GM12878 (cell line): ENCODE measurements at regions of chr19 and their contacts with region 1.

Region 1: GRCh38 chr19:18521885-18522624 is at the start of gene ELL:
- DNase-seq: peak; percentile 99
- ATAC-seq: peak; percentile 94
- H3K4me3 ChIP-seq: peak within 1 kb of the TSS; percentile 98
- H3K27ac ChIP-seq: peak within 1 kb of the TSS; percentile 89
- H3K4me1 ChIP-seq: peaks cover 8% of the 10 kb centered on the region
- H3K27me3 ChIP-seq: no peaks in the 10 kb centered on the region
- CTCF ChIP-seq: 0 out of 6 replicates have a peak, but pooled peaks of 1 of the 3 experiments have one; percentile 2
- EP300 ChIP-seq: no peak; a peak in 1 of 4 replicates
- POLR2A ChIP-seq: peak; percentile 98
- RAD21 ChIP-seq: no peak
- polyA plus RNA-seq, gene ELL: 0.91 to 0.98 TPM

Region 2: GRCh38 chr19:18469069-18469846 is 52.8 kb before region 1 on chr19:
- CTCF ChIA-PET with region 1: interaction called, 10 read pairs
- POLR2A ChIA-PET with region 1: no interaction called
- RAD21 ChIA-PET with region 1: no interaction called
- SMC1A ChIA-PET with region 1: interaction called, 4 read pairs
- in situ Hi-C with region 1: no loop called
- intact Hi-C with region 1: no loop called
- DNase-seq: no peak
- ATAC-seq: peak; percentile 78
- H3K4me3 ChIP-seq: no peak overlapping the region
- H3K27ac ChIP-seq: no peak overlapping the region
- H3K4me1 ChIP-seq: no peaks in the 10 kb centered on the region
- H3K27me3 ChIP-seq: no peaks in the 10 kb centered on the region
- CTCF ChIP-seq: peak; percentile 45 to 69 (median 66)
- EP300 ChIP-seq: no peak
- POLR2A ChIP-seq: no peak
- RAD21 ChIP-seq: peak; percentile 46; the same call in 1 of the 2 replicates

Region 3: GRCh38 chr19:18542936-18543815 is 21.1 kb after region 1 on chr19 and contains the start of gene FKBP8:
- CTCF ChIA-PET with region 1: interaction called, 16 read pairs
- POLR2A ChIA-PET with region 1: interaction called, 6 read pairs
- RAD21 ChIA-PET with region 1: interaction called, 7 read pairs
- SMC1A ChIA-PET with region 1: interaction called, 5 read pairs
- in situ Hi-C with region 1: no loop called
- intact Hi-C with region 1: no loop called
- DNase-seq: no peak
- ATAC-seq: peak; percentile 99
- H3K4me3 ChIP-seq: peak within 1 kb of the TSS; percentile 82
- H3K27ac ChIP-seq: peak within 1 kb of the TSS; percentile 78
- H3K4me1 ChIP-seq: peaks cover 10% of the 10 kb centered on the region
- H3K27me3 ChIP-seq: no peaks in the 10 kb centered on the region
- CTCF ChIP-seq: no peak
- EP300 ChIP-seq: no peak
- POLR2A ChIP-seq: no peak
- RAD21 ChIP-seq: no peak
- polyA plus RNA-seq, gene FKBP8: 0.13 to 1.1 TPM

Region 4: GRCh38 chr19:18571564-18572300 is 49.7 kb after region 1 on chr19 and contains the start of gene UBA52:
- CTCF ChIA-PET with region 1: interaction called, 16 read pairs
- POLR2A ChIA-PET with region 1: interaction called, 36 read pairs
- RAD21 ChIA-PET with region 1: interaction called, 26 read pairs
- SMC1A ChIA-PET with region 1: interaction called, 16 read pairs
- in situ Hi-C with region 1: no loop called
- intact Hi-C with region 1: loop called (anchors 1 kb)
- DNase-seq: peak; percentile 92
- ATAC-seq: peak; percentile 98
- H3K4me3 ChIP-seq: peak within 1 kb of the TSS; percentile 95
- H3K27ac ChIP-seq: peak within 1 kb of the TSS; percentile 76
- H3K4me1 ChIP-seq: peaks cover 11% of the 10 kb centered on the region; the same call in 1 of the 2 replicates
- H3K27me3 ChIP-seq: no peaks in the 10 kb centered on the region
- CTCF ChIP-seq: no peak
- EP300 ChIP-seq: 0 out of 4 replicates have a peak, but pooled peaks of 1 of the 2 experiments have one; percentile 17
- POLR2A ChIP-seq: peak; percentile 99
- RAD21 ChIP-seq: no peak
- polyA plus RNA-seq, gene UBA52: 2,192 to 2,288 TPM

Region 5: GRCh38 chr19:18594096-18594823 is 72.2 kb after region 1 on chr19:
- CTCF ChIA-PET with region 1: interaction called, 64 read pairs
- POLR2A ChIA-PET with region 1: interaction called, 21 read pairs
- RAD21 ChIA-PET with region 1: interaction called, 35 read pairs
- SMC1A ChIA-PET with region 1: interaction called, 18 read pairs
- in situ Hi-C with region 1: no loop called
- intact Hi-C with region 1: loop called (anchors 2 kb)
- DNase-seq: no peak
- ATAC-seq: peak; percentile 81
- H3K4me3 ChIP-seq: peak overlapping the region; percentile 67
- H3K27ac ChIP-seq: no peak overlapping the region
- H3K4me1 ChIP-seq: peaks cover 15% of the 10 kb centered on the region
- H3K27me3 ChIP-seq: peaks cover 2% of the 10 kb centered on the region in 2 experiments; a peak in 1 of 4 replicates
- CTCF ChIP-seq: peak; percentile 66 to 88 (median 81)
- EP300 ChIP-seq: no peak
- POLR2A ChIP-seq: no peak; the same call in none of the 2 replicates
- RAD21 ChIP-seq: peak; percentile 74

Region 6: DNA sequence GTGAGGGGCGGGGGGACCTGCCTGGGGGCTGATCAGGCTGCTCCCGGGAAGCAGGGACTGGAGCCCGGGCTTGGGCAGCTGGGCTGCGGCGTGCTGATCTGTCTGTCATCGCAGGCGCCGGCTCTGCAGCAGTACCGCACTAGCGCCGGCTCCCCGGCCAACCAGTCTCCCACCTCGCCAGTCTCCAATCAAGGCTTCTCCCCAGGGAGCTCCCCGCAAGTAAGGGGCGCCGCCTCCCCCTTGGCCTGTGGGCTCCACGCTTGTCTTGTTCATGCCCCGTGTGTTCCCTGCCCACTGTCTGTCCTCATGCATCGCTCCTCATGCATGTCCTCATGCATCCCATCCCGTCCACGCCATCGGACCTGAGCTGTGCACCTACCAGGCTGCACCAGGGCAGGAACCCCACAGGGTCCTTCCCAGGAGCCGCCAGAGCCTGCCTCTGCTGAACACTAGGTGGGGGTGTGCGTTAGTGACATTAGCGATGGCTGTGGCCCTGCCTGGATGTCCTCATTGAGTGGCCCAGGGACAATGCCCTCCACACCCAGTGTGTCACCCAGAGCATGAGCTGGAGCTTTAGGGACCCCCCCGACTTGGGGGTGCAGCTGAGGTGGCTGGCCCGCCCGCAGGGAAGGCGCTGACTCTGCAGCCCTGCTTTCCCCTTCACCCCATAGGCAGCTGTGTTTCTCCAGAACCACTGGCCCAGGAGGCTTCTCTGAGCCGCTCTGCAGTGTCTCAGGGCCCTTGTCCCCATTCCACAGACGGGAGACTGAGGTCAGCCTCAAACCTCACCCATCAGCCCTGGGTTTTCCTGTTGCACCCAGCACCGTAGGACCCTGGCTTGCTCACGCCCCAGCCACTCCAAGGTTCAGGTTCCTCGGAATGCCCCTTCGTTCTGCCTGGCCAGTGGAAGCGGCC is 249.5 kb after region 1 on chr19:
- CTCF ChIA-PET with region 1: no interaction called
- POLR2A ChIA-PET with region 1: no interaction called
- RAD21 ChIA-PET with region 1: no interaction called
- SMC1A ChIA-PET with region 1: no interaction called
- in situ Hi-C with region 1: no loop called
- intact Hi-C with region 1: no loop called
- DNase-seq: no peak
- ATAC-seq: peak; percentile 82
- H3K4me3 ChIP-seq: no peak overlapping the region
- H3K27ac ChIP-seq: no peak overlapping the region
- H3K4me1 ChIP-seq: no peaks in the 10 kb centered on the region
- H3K27me3 ChIP-seq: no peaks in the 10 kb centered on the region
- CTCF ChIP-seq: peak; percentile 38 to 60 (median 57); a peak in 4 of 6 replicates
- EP300 ChIP-seq: no peak
- POLR2A ChIP-seq: no peak
- RAD21 ChIP-seq: peak; percentile 43